ENCODE measurements at regions of chr2 and their contacts with region 1.

Region 1: GRCh38 chr2:206800506-206801417 is 35.4 kb downstream of the FASTKD2 start:
- DNase-seq: peak; percentile 66
- ATAC-seq: peak; percentile 77 to 82

Region 2: GRCh38 chr2:206981739-206982340 is 181.1 kb after region 1 on chr2:
- intact Hi-C with region 1: loop called in 1 of 2 experiments (anchors 10 kb)
- DNase-seq: peak; percentile 77
- ATAC-seq: peak; percentile 90 to 94

Region 3: GRCh38 chr2:206989306-206989705 is 188.5 kb after region 1 on chr2:
- intact Hi-C with region 1: loop called (anchors 2 to 10 kb)
- DNase-seq: peak; percentile 33
- ATAC-seq: peak; percentile 80 to 82

Region 4: GRCh38 chr2:207223051-207223450 is 422.3 kb after region 1 on chr2:
- intact Hi-C with region 1: loop called in 1 of 2 experiments (anchors 10 kb)
- DNase-seq: no peak
- ATAC-seq: no peak

Measured in left cardiac atrium (tissue), 4 donors.